ENCODE measurements at regions of chr2 and their contacts with region 1.

Region 1: GRCh38 chr2:105576440-105577252 is 168.1 kb upstream of the NCK2 start:
- DNase-seq: no peak
- ATAC-seq: peak; percentile 81
- H3K4me3 Mint-ChIP-seq: no peak overlapping the region
- H3K27ac Mint-ChIP-seq: peak overlapping the region; percentile 89
- H3K4me1 Mint-ChIP-seq: peaks cover 25% of the 10 kb centered on the region
- H3K27me3 Mint-ChIP-seq: no peaks in the 10 kb centered on the region

Region 2: DNA sequence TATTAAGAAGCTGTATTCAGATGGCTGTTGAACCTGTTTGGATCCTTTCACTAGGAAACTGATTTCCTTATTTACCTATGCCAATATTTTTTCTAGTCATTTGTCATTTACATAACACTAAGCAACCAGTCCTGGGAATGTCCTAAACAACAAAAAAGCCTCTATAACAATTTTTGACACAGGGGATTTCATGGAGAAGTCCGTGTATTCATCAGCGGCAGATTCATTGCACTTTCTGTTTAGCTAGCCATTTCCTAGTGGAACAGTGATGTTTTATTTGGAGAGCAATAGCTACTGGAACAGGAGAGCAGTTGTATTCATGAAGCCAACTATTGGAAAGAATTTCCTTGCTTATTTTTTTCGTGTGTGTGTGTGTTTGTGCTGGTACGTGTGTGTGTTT is 1327.0 kb before region 1 on chr2:
- CTCF ChIA-PET with region 1: no interaction called
- POLR2A ChIA-PET with region 1: no interaction called
- intact Hi-C with region 1: no loop called
- DNase-seq: no peak
- ATAC-seq: no peak
- H3K4me3 Mint-ChIP-seq: no peak overlapping the region
- H3K27ac Mint-ChIP-seq: no peak overlapping the region
- H3K4me1 Mint-ChIP-seq: no peaks in the 10 kb centered on the region
- H3K27me3 Mint-ChIP-seq: no peaks in the 10 kb centered on the region

Region 3: GRCh38 chr2:105143467-105144151 is 433.0 kb before region 1 on chr2:
- CTCF ChIA-PET with region 1: no interaction called
- POLR2A ChIA-PET with region 1: no interaction called
- intact Hi-C with region 1: no loop called
- DNase-seq: peak; percentile 61
- ATAC-seq: peak; percentile 69
- H3K4me3 Mint-ChIP-seq: peak overlapping the region; percentile 73
- H3K27ac Mint-ChIP-seq: no peak overlapping the region
- H3K4me1 Mint-ChIP-seq: peaks cover 8% of the 10 kb centered on the region
- H3K27me3 Mint-ChIP-seq: peaks cover 39% of the 10 kb centered on the region

Region 4: DNA sequence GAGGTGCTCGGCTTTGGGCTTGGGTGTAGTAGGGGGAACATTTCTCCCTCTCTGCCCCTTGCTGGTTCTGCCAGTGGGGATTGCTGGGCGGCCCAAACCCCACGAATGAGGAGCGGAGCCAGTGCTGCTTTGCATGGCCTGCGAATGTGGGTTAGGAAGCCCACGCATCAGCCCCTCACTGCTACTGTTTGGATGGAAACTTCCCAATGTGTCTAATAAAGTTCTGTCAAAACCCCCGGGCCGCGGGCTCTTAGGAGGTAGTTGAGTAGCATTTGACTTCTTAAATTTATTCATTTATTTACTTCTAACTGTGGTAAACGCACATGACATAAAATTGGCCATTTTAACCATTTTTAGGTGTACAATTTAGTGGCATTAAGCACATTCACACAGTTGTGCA is 16.5 kb before region 1 on chr2:
- CTCF ChIA-PET with region 1: no interaction called
- POLR2A ChIA-PET with region 1: no interaction called
- intact Hi-C with region 1: no loop called
- DNase-seq: no peak
- ATAC-seq: no peak
- H3K4me3 Mint-ChIP-seq: no peak overlapping the region
- H3K27ac Mint-ChIP-seq: no peak overlapping the region
- H3K4me1 Mint-ChIP-seq: no peaks in the 10 kb centered on the region
- H3K27me3 Mint-ChIP-seq: peaks cover 11% of the 10 kb centered on the region

Region 5: GRCh38 chr2:105595536-105595935 is 18.9 kb after region 1 on chr2:
- CTCF ChIA-PET with region 1: interaction called, 20 read pairs
- POLR2A ChIA-PET with region 1: no interaction called
- intact Hi-C with region 1: no loop called
- DNase-seq: peak; percentile 54
- ATAC-seq: peak; percentile 73
- H3K4me3 Mint-ChIP-seq: no peak overlapping the region
- H3K27ac Mint-ChIP-seq: no peak overlapping the region
- H3K4me1 Mint-ChIP-seq: peaks cover 30% of the 10 kb centered on the region
- H3K27me3 Mint-ChIP-seq: no peaks in the 10 kb centered on the region

Region 6: DNA sequence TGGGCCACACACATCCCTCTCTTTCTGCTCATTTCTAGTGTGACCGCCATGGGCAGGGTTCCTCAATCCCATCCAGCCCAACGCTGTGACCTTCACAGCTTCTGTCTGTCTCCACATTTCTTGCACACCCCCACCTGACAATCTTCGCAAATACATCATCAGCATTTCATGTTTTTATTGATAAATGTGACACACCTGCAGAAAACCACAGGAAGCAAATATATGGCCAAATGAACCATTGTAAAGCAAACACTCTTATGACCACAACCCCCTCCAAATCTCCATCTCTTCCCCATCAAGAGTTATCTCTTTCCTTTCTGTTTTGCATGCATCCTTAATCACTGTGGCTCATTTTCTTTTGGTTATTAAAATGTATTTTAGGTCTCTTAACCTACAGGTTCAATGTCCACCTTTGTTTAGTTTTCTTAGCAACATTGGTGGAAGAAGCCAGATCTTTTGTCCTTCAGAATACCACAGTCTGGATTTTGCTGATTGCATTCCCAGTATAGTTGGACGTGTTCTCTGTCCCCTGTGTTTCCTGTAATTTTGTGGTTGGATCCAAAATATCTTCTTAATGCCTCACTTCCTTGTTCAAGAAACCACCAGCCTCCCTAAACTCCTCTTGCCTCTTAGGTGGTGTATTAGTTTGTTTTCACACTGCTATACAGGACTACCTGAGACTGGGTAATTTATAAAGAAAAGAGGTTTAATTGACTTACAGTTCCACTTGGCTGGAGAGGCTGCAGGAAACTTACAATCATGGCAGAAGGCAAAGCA is 158.3 kb after region 1 on chr2:
- CTCF ChIA-PET with region 1: interaction called, 4 read pairs
- POLR2A ChIA-PET with region 1: no interaction called
- intact Hi-C with region 1: loop called (anchors 2 kb)
- DNase-seq: no peak
- ATAC-seq: no peak
- H3K4me3 Mint-ChIP-seq: no peak overlapping the region
- H3K27ac Mint-ChIP-seq: no peak overlapping the region
- H3K4me1 Mint-ChIP-seq: peaks cover 52% of the 10 kb centered on the region
- H3K27me3 Mint-ChIP-seq: no peaks in the 10 kb centered on the region

Region 7: DNA sequence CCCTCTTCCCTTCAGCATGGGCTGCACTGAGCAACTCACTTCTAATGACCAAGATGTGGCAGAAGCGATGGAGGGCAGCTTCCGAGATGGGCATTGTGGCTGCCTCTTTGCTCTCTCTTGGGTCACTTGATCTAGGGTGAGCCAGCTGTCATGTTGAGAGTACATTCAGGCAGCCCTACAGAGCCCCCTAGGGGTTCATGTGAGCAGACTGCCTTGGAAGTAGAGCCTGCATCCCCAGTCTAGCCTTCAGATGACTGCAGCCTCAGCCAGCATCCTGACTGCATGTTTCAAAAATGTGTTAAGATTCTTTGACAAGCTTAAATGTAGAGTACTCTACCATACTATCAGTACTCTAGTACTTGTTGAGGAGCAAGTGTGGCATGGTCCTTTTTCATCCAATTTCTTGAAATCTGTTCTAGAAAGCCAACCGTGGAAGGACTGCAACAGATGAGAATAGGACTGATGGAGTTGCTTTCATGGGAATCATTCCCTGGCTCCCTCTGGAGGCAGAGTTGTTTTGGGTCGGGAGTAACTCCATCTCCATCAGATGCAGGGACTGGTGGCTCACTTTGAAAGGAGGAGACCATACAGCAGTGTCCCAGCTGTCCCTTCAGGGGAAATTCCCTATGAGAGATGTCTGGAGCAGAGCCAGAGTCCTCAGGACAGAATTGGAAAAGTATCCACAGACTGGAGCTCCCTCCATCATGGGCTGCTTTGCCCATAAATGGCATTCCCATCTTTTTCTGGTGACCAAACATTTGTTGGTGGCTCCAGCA is 312.2 kb after region 1 on chr2:
- CTCF ChIA-PET with region 1: interaction called, 6 read pairs
- POLR2A ChIA-PET with region 1: no interaction called
- intact Hi-C with region 1: loop called (anchors 5 to 10 kb)
- DNase-seq: peak; percentile 63
- ATAC-seq: peak; percentile 80
- H3K4me3 Mint-ChIP-seq: no peak overlapping the region
- H3K27ac Mint-ChIP-seq: peak overlapping the region; percentile 4
- H3K4me1 Mint-ChIP-seq: peaks cover 66% of the 10 kb centered on the region
- H3K27me3 Mint-ChIP-seq: no peaks in the 10 kb centered on the region

Region 8: DNA sequence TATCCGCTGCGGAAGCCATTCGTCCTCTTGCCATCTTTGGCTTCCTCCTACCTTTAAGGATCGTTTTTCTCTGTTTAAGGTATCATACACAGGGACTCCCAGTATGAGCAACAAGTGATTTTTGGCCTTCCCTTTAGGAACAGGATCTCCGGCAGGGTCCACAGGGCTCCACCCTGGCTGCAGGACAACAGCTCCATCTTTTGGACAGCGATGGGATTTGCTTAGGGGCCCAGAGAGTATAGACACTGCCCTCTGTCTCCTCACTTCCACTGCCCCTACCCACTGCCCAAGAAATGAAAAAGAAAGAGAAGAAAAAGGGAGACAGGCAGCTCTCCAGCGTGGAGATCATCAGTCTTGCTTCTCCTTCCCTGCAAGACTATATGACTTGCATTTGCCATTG is 392.9 kb after region 1 on chr2:
- CTCF ChIA-PET with region 1: interaction called, 4 read pairs
- POLR2A ChIA-PET with region 1: no interaction called
- intact Hi-C with region 1: loop called (anchors 1 to 10 kb)
- DNase-seq: peak; percentile 56
- ATAC-seq: peak; percentile 90
- H3K4me3 Mint-ChIP-seq: no peak overlapping the region
- H3K27ac Mint-ChIP-seq: no peak overlapping the region
- H3K4me1 Mint-ChIP-seq: peaks cover 17% of the 10 kb centered on the region
- H3K27me3 Mint-ChIP-seq: no peaks in the 10 kb centered on the region

Region 9: GRCh38 chr2:106098081-106098480 is 521.4 kb after region 1 on chr2:
- CTCF ChIA-PET with region 1: interaction called, 6 read pairs
- POLR2A ChIA-PET with region 1: no interaction called
- intact Hi-C with region 1: loop called (anchors 2 kb)
- DNase-seq: peak; percentile 65
- ATAC-seq: no peak
- H3K4me3 Mint-ChIP-seq: no peak overlapping the region
- H3K27ac Mint-ChIP-seq: no peak overlapping the region
- H3K4me1 Mint-ChIP-seq: peaks cover 41% of the 10 kb centered on the region
- H3K27me3 Mint-ChIP-seq: no peaks in the 10 kb centered on the region